GM18951 (cell line): ENCODE measurements at regions of chr19 and their contacts with region 1.

Region 1: DNA sequence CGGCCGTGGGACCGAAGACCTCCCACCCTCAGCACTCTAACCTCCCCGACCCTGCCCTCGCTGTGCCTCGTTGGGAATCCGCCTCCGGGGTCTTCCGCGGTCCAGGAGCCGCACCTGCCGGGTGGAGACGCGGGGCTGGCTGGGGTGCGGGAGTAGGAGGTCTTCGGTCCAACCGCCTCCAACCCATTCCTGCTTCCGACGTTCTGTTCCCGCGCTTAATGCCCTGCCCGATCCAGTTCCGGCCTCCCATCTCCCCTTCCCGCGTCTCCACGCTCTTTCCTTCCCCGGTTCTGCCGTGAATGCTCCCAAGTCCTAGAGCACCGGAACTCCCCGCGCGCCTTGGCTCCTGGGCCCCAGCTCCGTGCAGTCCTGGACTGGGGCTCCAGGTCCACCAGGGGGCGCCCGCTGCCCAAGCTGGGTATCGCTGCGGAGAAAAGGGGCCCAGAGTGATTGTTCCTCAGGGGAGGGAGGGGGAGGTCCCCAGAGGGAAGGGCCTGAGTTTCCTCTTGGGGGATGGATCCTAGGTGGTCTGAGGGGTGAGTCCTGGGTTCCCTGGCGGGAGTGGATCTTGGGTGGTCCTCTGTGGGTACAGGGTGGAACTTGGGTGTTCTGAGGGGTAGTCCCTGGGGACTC is 14.1 kb upstream of the TNFSF9 start:
- POLR2A ChIP-seq: no peak

Region 2: GRCh38 chr19:6602729-6603114 is 85.9 kb after region 1 on chr19:
- in situ Hi-C with region 1: no loop called
- POLR2A ChIP-seq: no peak

Region 3: GRCh38 chr19:6626764-6627163 is 110.0 kb after region 1 on chr19:
- in situ Hi-C with region 1: loop called (anchors 10 kb)
- POLR2A ChIP-seq: no peak